Activated CD4-positive, alpha-beta T cell treated with anti-CD3 and anti-CD28 coated beads for 36 hours (primary cell): ENCODE measurements at regions of chr2 and their contacts with region 1.

Region 1: GRCh38 chr2:112054847-112055729 is at the start of gene TMEM87B:
- DNase-seq: peak; percentile 100
- ATAC-seq: peak; percentile 79
- H3K4me3 Mint-ChIP-seq: peak within 1 kb of the TSS; percentile 97
- H3K27ac Mint-ChIP-seq: peak within 1 kb of the TSS; percentile 99
- H3K4me1 Mint-ChIP-seq: peaks cover 37% of the 10 kb centered on the region
- H3K27me3 Mint-ChIP-seq: no peaks in the 10 kb centered on the region
- total RNA-seq, gene TMEM87B: 14.5 to 17.6 TPM

Region 2: GRCh38 chr2:111120253-111121027 is 934.6 kb before region 1 on chr2 and contains the start of gene BCL2L11:
- CTCF ChIA-PET with region 1: no interaction called
- POLR2A ChIA-PET with region 1: no interaction called
- intact Hi-C with region 1: loop called in 1 of 2 experiments (anchors 1 kb)
- DNase-seq: peak; percentile 93
- ATAC-seq: peak; percentile 67
- H3K4me3 Mint-ChIP-seq: peak within 1 kb of the TSS; percentile 90
- H3K27ac Mint-ChIP-seq: peak within 1 kb of the TSS; percentile 85
- H3K4me1 Mint-ChIP-seq: peaks cover 60% of the 10 kb centered on the region
- H3K27me3 Mint-ChIP-seq: peaks cover 18% of the 10 kb centered on the region
- total RNA-seq, gene BCL2L11: 18.2 to 28.6 TPM

Region 3: DNA sequence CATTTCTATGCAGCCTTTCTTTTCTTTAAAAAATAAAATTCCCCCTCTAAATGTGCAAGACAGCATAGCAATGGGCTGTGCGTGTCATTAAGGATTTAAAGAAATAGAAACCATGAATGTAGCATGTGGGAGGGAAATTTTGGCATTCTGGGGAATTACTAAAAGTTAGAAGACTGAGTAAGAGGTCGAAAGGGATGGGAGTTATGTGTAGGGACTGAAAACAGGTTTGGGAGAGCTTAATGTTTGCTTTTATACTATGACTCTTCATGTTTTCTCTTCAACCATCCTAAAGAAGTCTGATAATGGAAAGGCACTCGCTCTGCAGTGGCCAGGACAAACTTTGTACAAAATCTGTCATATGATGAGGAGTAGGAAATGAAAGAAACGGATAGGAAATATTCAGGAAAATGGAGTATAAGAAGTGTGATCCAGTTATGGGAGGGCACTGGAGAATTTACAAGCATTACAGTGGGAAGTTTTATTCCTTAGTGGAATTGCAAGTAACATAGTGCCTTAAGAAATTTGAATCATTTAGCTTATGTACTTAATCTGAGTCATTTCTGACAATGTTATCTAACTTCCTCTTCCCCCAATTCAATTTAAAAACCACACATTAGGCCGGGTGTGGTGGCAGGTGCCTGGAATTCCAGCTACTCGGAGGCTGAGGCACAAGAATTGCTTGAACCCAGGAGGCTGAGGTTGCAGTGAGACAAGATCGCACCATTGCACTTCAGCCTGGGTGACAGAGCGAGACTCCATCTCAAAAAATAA is 20.6 kb after region 1 on chr2:
- CTCF ChIA-PET with region 1: interaction called, 3 read pairs
- POLR2A ChIA-PET with region 1: no interaction called
- intact Hi-C with region 1: loop called in 1 of 2 experiments (anchors 2 kb)
- DNase-seq: no peak
- ATAC-seq: peak; percentile 47
- H3K4me3 Mint-ChIP-seq: no peak overlapping the region
- H3K27ac Mint-ChIP-seq: peak overlapping the region; percentile 59
- H3K4me1 Mint-ChIP-seq: peaks cover 49% of the 10 kb centered on the region
- H3K27me3 Mint-ChIP-seq: no peaks in the 10 kb centered on the region

Region 4: GRCh38 chr2:112254466-112255239 is 199.6 kb after region 1 on chr2 and contains the start of gene ZC3H8:
- CTCF ChIA-PET with region 1: no interaction called
- POLR2A ChIA-PET with region 1: interaction called, 5 read pairs
- intact Hi-C with region 1: loop called (anchors 1 to 5 kb)
- DNase-seq: peak; percentile 98
- ATAC-seq: peak; percentile 92
- H3K4me3 Mint-ChIP-seq: no peak within 1 kb of the TSS
- H3K27ac Mint-ChIP-seq: peak within 1 kb of the TSS; percentile 88
- H3K4me1 Mint-ChIP-seq: peaks cover 19% of the 10 kb centered on the region
- H3K27me3 Mint-ChIP-seq: no peaks in the 10 kb centered on the region
- total RNA-seq, gene ZC3H8: 21.6 to 27.1 TPM

Region 5: GRCh38 chr2:112542123-112542983 is 487.3 kb after region 1 on chr2 and contains the start of gene POLR1B:
- CTCF ChIA-PET with region 1: interaction called, 3 read pairs
- POLR2A ChIA-PET with region 1: interaction called, 3 read pairs
- intact Hi-C with region 1: loop called in 1 of 2 experiments (anchors 1 kb)
- DNase-seq: peak; percentile 87
- ATAC-seq: peak; percentile 85
- H3K4me3 Mint-ChIP-seq: no peak within 1 kb of the TSS
- H3K27ac Mint-ChIP-seq: no peak within 1 kb of the TSS
- H3K4me1 Mint-ChIP-seq: peaks cover 18% of the 10 kb centered on the region
- H3K27me3 Mint-ChIP-seq: no peaks in the 10 kb centered on the region
- total RNA-seq, gene POLR1B: 47.0 to 63.3 TPM

Region 6: GRCh38 chr2:113889471-113890252 is 1834.6 kb after region 1 on chr2 and contains the start of gene ACTR3:
- CTCF ChIA-PET with region 1: no interaction called
- POLR2A ChIA-PET with region 1: no interaction called
- intact Hi-C with region 1: loop called in 1 of 2 experiments (anchors 10 kb)
- DNase-seq: peak; percentile 99
- ATAC-seq: peak; percentile 79
- H3K4me3 Mint-ChIP-seq: peak within 1 kb of the TSS; percentile 94
- H3K27ac Mint-ChIP-seq: peak within 1 kb of the TSS; percentile 99
- H3K4me1 Mint-ChIP-seq: peaks cover 67% of the 10 kb centered on the region
- H3K27me3 Mint-ChIP-seq: no peaks in the 10 kb centered on the region
- total RNA-seq, gene ACTR3: 495 to 583 TPM